T-cell (primary cell): ENCODE measurements at regions of chr4 and their contacts with region 1.

Region 1: GRCh38 chr4:151207868-151208267 is 69.1 kb upstream of the PRSS48 start:
- DNase-seq: no peak
- ATAC-seq: no peak
- H3K4me3 ChIP-seq: no peak overlapping the region
- H3K4me3 Mint-ChIP-seq: no peak overlapping the region
- H3K27ac ChIP-seq: no peak overlapping the region
- H3K27ac Mint-ChIP-seq: no peak overlapping the region
- H3K4me1 ChIP-seq: no peaks in the 10 kb centered on the region
- H3K4me1 Mint-ChIP-seq: no peaks in the 10 kb centered on the region
- H3K27me3 ChIP-seq: no peaks in the 10 kb centered on the region
- H3K27me3 Mint-ChIP-seq: peaks cover 0 to 2% of the 10 kb centered on the region in 2 donors

Region 2: GRCh38 chr4:152572417-152573086 is 1364.7 kb after region 1 on chr4:
- CTCF ChIA-PET with region 1: no interaction called
- POLR2A ChIA-PET with region 1: interaction called in 1 of 2 experiments, 10 read pairs
- DNase-seq: no peak
- ATAC-seq: no peak
- H3K4me3 ChIP-seq: no peak overlapping the region
- H3K4me3 Mint-ChIP-seq: no peak overlapping the region
- H3K27ac ChIP-seq: no peak overlapping the region
- H3K27ac Mint-ChIP-seq: no peak overlapping the region
- H3K4me1 ChIP-seq: no peaks in the 10 kb centered on the region
- H3K4me1 Mint-ChIP-seq: no peaks in the 10 kb centered on the region
- H3K27me3 ChIP-seq: no peaks in the 10 kb centered on the region
- H3K27me3 Mint-ChIP-seq: no peaks in the 10 kb centered on the region